PC-3 (cell line): ENCODE measurements at regions of chr11 and their contacts with region 1.

Region 1: GRCh38 chr11:101860696-101861427 is 53.9 kb upstream of the CEP126 start:
- DNase-seq: peak; percentile 90
- ATAC-seq: peak; percentile 79
- H3K4me3 ChIP-seq: no peak overlapping the region
- H3K27ac ChIP-seq: no peak overlapping the region
- H3K4me1 ChIP-seq: peaks cover 31% of the 10 kb centered on the region
- H3K27me3 ChIP-seq: no peaks in the 10 kb centered on the region
- CTCF ChIP-seq: peak; percentile 91

Region 2: DNA sequence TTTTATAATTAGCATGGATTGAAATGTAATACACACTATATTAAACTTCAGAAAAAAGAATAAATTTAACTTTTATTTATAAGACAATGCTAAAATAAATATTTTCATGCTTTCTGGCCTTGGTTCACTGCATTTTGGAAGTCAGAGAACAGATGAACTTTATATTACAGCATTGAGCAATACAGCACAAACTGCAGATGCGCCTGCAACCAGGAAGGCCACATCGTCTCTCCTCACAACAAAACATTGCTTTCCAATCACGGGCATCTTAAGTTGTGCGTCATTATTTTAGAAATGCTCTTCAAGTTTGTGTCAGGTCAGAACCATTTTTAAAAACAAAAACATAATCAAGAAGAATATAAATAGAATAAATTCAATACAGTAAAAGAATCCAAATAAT is 35.3 kb before region 1 on chr11:
- CTCF ChIA-PET with region 1: no interaction called
- POLR2A ChIA-PET with region 1: no interaction called
- intact Hi-C with region 1: no loop called
- DNase-seq: no peak
- ATAC-seq: no peak
- H3K4me3 ChIP-seq: no peak overlapping the region
- H3K27ac ChIP-seq: no peak overlapping the region
- H3K4me1 ChIP-seq: no peaks in the 10 kb centered on the region
- H3K27me3 ChIP-seq: no peaks in the 10 kb centered on the region
- CTCF ChIP-seq: no peak

Region 3: GRCh38 chr11:101880222-101880621 is 19.4 kb after region 1 on chr11:
- CTCF ChIA-PET with region 1: interaction called, 9 read pairs
- POLR2A ChIA-PET with region 1: no interaction called
- intact Hi-C with region 1: loop called (anchors 1 kb)
- DNase-seq: peak; percentile 78
- ATAC-seq: peak; percentile 65
- H3K4me3 ChIP-seq: no peak overlapping the region
- H3K27ac ChIP-seq: no peak overlapping the region
- H3K4me1 ChIP-seq: peaks cover 13% of the 10 kb centered on the region; the same call in 1 of the 2 replicates
- H3K27me3 ChIP-seq: no peaks in the 10 kb centered on the region
- CTCF ChIP-seq: peak; percentile 85

Region 4: DNA sequence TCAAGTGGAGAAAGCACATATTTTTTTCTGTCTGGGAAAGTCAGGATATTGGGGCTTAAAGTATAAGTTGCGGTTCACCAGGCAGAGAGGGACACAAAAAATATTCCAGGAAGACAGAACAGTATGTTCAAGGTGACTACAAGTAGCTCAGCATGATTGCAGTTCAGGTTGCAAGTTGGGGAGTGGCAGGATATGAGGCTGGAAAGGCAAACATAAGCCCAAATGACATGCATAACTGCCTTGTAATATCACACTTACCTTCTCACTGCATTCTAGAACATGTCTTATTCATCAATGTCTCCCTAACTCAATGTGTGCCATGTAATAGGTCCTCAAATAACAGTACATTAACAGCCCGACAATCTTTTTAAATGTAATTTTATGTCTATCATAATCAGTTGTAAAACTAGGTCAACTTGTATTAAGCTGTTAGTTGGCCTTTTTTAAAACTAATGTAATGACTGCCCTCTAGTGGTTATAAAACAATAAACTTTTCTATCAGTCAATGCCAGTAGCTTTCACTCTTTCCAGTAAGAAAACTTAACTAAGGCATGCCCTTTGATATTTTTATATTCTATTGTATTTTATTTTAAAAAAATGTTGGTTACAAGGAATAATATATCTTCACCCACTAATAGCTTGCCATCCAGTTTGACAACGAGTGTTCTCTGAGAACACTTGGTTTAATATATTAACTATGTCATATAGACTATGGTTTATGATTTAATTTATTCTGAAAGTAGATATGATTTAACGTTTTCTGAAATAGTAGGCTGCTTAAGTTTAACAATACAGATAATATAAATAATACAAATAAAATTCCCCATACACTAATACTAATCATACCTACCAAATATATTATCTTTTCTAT is 146.9 kb after region 1 on chr11:
- CTCF ChIA-PET with region 1: interaction called, 43 read pairs
- POLR2A ChIA-PET with region 1: no interaction called
- intact Hi-C with region 1: loop called (anchors 1 kb)
- DNase-seq: peak; percentile 96
- ATAC-seq: peak; percentile 75
- H3K4me3 ChIP-seq: peak overlapping the region; percentile 41
- H3K27ac ChIP-seq: peak overlapping the region; percentile 90
- H3K4me1 ChIP-seq: peaks cover 61% of the 10 kb centered on the region
- H3K27me3 ChIP-seq: no peaks in the 10 kb centered on the region
- CTCF ChIP-seq: peak; percentile 85

Region 5: DNA sequence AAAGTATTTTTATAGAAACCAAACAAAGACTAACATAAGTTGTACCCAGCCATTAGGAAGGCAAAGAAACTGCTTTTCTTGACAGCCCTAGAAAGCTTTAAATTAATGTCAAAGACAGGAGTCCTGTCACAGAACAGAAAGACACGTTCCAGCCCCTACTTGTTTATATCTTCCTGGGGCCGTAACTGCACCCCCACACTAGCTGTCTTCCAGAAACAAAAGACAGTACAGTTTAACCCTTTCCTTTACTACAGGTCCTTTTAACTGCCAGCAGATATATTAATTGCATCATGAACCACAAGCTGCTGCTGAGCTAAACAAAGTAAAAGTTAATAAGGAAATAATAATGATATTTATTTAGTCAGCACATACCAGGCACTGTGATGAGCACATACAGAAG is 166.1 kb after region 1 on chr11:
- CTCF ChIA-PET with region 1: no interaction called
- POLR2A ChIA-PET with region 1: no interaction called
- intact Hi-C with region 1: no loop called
- DNase-seq: no peak
- ATAC-seq: no peak
- H3K4me3 ChIP-seq: no peak overlapping the region
- H3K27ac ChIP-seq: no peak overlapping the region
- H3K4me1 ChIP-seq: no peaks in the 10 kb centered on the region
- H3K27me3 ChIP-seq: no peaks in the 10 kb centered on the region
- CTCF ChIP-seq: no peak

Region 6: GRCh38 chr11:102268329-102269193 is 407.7 kb after region 1 on chr11:
- CTCF ChIA-PET with region 1: interaction called, 3 read pairs
- POLR2A ChIA-PET with region 1: interaction called, 3 read pairs
- intact Hi-C with region 1: loop called (anchors 5 kb)
- DNase-seq: peak; percentile 98
- ATAC-seq: peak; percentile 97
- H3K4me3 ChIP-seq: peak overlapping the region; percentile 85
- H3K27ac ChIP-seq: peak overlapping the region; percentile 65
- H3K4me1 ChIP-seq: peaks cover 33% of the 10 kb centered on the region
- H3K27me3 ChIP-seq: no peaks in the 10 kb centered on the region
- CTCF ChIP-seq: peak; percentile 73

Region 7: GRCh38 chr11:102666331-102666957 is 805.6 kb after region 1 on chr11:
- CTCF ChIA-PET with region 1: no interaction called
- POLR2A ChIA-PET with region 1: no interaction called
- intact Hi-C with region 1: loop called (anchors 5 kb)
- DNase-seq: peak; percentile 79
- ATAC-seq: peak; percentile 67
- H3K4me3 ChIP-seq: no peak overlapping the region
- H3K27ac ChIP-seq: no peak overlapping the region
- H3K4me1 ChIP-seq: no peaks in the 10 kb centered on the region
- H3K27me3 ChIP-seq: no peaks in the 10 kb centered on the region
- CTCF ChIP-seq: peak; percentile 97